ENCODE measurements at regions of chr19 and their contacts with region 1.

Region 1: DNA sequence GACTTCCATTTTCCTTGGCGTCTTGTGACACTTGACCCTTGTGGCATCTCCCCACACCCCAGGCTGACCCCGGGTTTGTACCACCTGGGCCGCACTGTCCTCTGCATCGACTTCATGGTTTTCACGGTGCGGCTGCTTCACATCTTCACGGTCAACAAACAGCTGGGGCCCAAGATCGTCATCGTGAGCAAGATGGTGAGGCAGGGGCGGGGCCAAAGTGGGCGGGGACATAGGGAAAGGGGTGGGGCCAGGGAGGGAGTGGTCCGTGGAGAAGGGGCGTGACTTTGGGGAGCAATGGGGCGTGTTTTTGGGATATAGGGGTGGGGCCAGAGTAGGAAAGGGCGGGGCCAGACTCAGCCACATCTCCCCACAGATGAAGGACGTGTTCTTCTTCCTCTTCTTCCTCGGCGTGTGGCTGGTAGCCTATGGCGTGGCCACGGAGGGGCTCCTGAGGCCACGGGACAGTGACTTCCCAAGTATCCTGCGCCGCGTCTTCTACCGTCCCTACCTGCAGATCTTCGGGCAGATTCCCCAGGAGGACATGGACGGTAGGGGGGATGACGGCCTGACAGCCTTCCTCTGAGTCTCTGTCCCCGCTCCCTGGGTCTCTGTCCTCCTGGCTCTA is 42.8 kb downstream of the TRPM4 start:
- DNase-seq: no peak
- ATAC-seq: no peak
- H3K4me3 Mint-ChIP-seq: no peak overlapping the region
- H3K27ac Mint-ChIP-seq: no peak overlapping the region
- H3K4me1 Mint-ChIP-seq: peaks cover 6% of the 10 kb centered on the region
- H3K27me3 Mint-ChIP-seq: peaks cover 7% of the 10 kb centered on the region

Region 2: GRCh38 chr19:49188626-49189200 is 11.6 kb before region 1 on chr19:
- CTCF ChIA-PET with region 1: interaction called, 10 read pairs
- DNase-seq: no peak
- ATAC-seq: no peak
- H3K4me3 Mint-ChIP-seq: no peak overlapping the region
- H3K27ac Mint-ChIP-seq: no peak overlapping the region
- H3K4me1 Mint-ChIP-seq: peaks cover 13% of the 10 kb centered on the region
- H3K27me3 Mint-ChIP-seq: peaks cover 6% of the 10 kb centered on the region